CD14-positive monocyte (primary cell): ENCODE measurements at regions of chr9 and their contacts with region 1.

Region 1: DNA sequence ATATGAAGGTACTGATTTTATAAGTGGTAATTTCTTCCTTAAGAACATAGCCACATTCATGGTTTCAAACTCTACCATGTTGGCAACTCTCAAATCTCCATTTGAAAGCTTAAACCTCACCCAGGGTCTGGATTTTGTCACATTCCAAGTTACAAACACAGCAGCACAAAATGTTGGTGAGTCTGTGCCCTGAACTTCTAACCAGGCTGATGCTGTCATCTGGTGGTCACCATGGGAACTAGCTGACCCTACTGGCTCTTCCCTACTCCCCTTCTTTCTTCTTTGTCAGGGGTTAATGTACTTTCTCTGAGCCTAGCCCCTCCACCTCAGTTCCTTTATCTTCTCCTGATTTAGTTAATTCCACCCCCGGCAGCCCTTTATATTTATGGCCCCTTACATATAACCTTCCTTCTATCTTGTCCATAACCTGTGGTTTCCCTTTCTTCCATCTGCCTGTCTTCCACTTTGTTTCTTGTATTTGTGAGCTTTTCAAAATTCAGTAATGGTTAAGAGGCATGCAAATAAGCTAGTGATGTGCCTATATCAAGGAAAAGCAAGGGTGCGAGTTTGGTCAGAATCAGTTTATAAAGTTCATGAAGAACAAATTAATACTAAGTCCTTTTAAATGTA is 35.9 kb downstream of the TGFBR1 start:
- DNase-seq: peak; percentile 52 to 66 (median 64)
- H3K4me3 ChIP-seq: no peak overlapping the region
- H3K4me3 Mint-ChIP-seq: no peak overlapping the region
- H3K27ac ChIP-seq: no peak overlapping the region
- H3K27ac Mint-ChIP-seq: peak overlapping the region in 4 of 7 donors; percentile 0 to 44 (median 30)
- H3K4me1 ChIP-seq: peaks cover 22 to 26% of the 10 kb centered on the region in 2 donors
- H3K4me1 Mint-ChIP-seq: peaks cover 34% of the 10 kb centered on the region
- H3K27me3 ChIP-seq: no peaks in the 10 kb centered on the region
- H3K27me3 Mint-ChIP-seq: peaks cover 0 to 2% (median under 1%) of the 10 kb centered on the region in 3 donors
- CTCF ChIP-seq: peak; percentile 95

Region 2: GRCh38 chr9:98974994-98975712 is 165.6 kb before region 1 on chr9:
- intact Hi-C with region 1: loop called (anchors 1 to 5 kb)
- DNase-seq: peak; percentile 53 to 63 (median 60)
- H3K4me3 ChIP-seq: no peak overlapping the region
- H3K4me3 Mint-ChIP-seq: peak overlapping the region in 1 of 2 donors; percentile 80
- H3K27ac ChIP-seq: no peak overlapping the region
- H3K27ac Mint-ChIP-seq: peak overlapping the region in 2 of 7 donors; percentile 12 to 35
- H3K4me1 ChIP-seq: peaks cover 4 to 6% of the 10 kb centered on the region in 2 donors
- H3K4me1 Mint-ChIP-seq: peaks cover 9% of the 10 kb centered on the region
- H3K27me3 ChIP-seq: peaks cover 5 to 16% of the 10 kb centered on the region in 2 donors
- H3K27me3 Mint-ChIP-seq: peaks cover 17 to 43% (median 30%) of the 10 kb centered on the region in 3 donors
- CTCF ChIP-seq: peak; percentile 98

Region 3: DNA sequence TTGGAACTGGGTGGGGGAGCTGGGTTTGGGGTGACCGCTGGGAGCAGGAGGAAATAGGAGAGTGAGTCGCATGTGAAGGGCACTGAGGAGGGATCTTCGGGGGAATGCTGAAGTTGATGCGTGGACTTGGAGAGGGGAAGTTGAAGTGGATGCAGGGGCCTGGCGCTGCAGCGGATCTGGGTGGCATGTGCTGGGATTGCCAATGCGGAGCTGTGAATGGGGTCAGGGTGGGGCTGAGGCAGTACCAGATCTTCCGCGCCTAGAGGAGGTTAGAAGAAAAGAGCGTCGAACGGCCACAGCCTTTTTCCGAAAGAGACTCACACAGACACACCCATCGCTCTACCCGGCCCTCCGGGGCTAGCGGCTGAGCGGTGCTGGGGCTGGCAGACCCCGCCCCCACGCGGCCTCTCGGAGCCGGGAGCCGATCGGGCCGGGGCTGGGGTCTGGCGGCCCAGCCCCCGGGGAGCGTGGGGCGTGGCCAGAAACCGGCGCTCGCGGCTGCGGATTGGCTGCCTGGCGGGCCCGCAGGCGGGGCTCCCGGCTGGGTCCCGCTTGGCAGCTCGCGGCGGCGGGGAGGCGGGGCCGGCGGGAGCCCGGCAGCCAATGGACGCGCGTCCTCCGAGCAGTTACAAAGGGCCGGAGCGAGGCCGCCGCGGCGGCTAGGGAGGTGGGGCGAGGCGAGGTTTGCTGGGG is 36.2 kb before region 1 on chr9 and contains the start of gene TGFBR1:
- intact Hi-C with region 1: loop called in 1 of 2 experiments (anchors 2 kb)
- DNase-seq: peak; percentile 82 to 88 (median 83)
- H3K4me3 ChIP-seq: peak within 1 kb of the TSS; percentile 74 to 96 (median 85)
- H3K4me3 Mint-ChIP-seq: peak within 1 kb of the TSS; percentile 96 to 99
- H3K27ac ChIP-seq: peak within 1 kb of the TSS; percentile 68 to 94
- H3K27ac Mint-ChIP-seq: peak within 1 kb of the TSS; percentile 87 to 98 (median 95)
- H3K4me1 ChIP-seq: peaks cover 47 to 52% of the 10 kb centered on the region in 2 donors
- H3K4me1 Mint-ChIP-seq: peaks cover 50% of the 10 kb centered on the region
- H3K27me3 ChIP-seq: no peaks in the 10 kb centered on the region
- H3K27me3 Mint-ChIP-seq: peaks cover 0 to 5% (median 0%) of the 10 kb centered on the region in 3 donors
- CTCF ChIP-seq: no peak
- polyA plus RNA-seq, gene TGFBR1: 10.7 to 26.8 (median 25.0) TPM

Region 4: GRCh38 chr9:99130069-99130468 is 10.7 kb before region 1 on chr9:
- intact Hi-C with region 1: no loop called
- DNase-seq: peak in 2 of 3 donors; percentile 29 to 51
- H3K4me3 ChIP-seq: no peak overlapping the region
- H3K4me3 Mint-ChIP-seq: no peak overlapping the region
- H3K27ac ChIP-seq: no peak overlapping the region
- H3K27ac Mint-ChIP-seq: peak overlapping the region in 3 of 7 donors; percentile 3 to 69 (median 24)
- H3K4me1 ChIP-seq: peaks cover 3 to 4% of the 10 kb centered on the region in 2 donors
- H3K4me1 Mint-ChIP-seq: peaks cover 35% of the 10 kb centered on the region
- H3K27me3 ChIP-seq: no peaks in the 10 kb centered on the region
- H3K27me3 Mint-ChIP-seq: no peaks in the 10 kb centered on the region
- CTCF ChIP-seq: no peak

Region 5: DNA sequence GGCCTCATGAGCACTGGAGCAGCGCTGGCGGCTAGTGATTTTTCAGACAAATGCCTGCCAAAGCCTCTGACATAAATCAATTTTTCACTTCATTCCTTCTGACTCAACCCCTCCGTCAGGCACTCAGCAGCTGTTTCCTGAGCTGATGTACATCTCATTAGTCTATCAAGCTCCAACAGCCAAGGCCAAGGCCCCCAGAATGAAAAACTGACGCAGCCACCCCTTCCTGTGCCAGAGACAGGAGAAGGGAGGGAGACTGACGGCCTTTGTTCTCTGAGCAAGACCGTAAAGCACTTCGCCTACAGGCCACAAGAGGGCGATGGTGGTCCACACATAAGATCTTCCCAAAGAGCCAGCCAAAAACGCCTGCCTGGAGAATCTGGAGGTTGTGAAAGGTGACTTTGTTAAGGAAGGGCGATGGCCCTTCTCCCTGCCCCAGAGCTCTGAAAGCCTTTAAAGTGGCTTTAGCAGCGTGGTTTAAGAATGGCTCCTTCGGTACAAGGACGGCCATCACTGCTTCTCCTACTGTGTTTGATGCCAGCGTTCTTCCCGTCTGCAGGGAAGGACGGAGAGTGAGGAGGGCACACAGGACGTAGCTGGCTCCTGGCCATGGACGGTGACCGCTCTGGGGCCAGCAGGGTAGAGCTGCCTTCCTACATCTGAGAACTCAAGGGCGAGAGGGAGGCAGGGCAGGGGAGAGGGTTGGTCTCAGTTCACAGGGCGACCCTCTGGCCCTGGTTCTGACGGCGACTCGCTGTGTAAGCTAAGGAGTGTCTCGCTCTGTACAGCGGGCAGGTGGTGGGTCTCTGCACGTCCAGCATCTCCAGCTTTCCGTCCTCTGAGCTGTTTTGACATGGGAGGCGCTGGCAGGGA is 43.9 kb after region 1 on chr9:
- intact Hi-C with region 1: no loop called
- DNase-seq: peak; percentile 65 to 82 (median 73)
- H3K4me3 ChIP-seq: peak overlapping the region in 1 of 3 experiments; percentile 41
- H3K4me3 Mint-ChIP-seq: peak overlapping the region; percentile 39 to 46
- H3K27ac ChIP-seq: no peak overlapping the region
- H3K27ac Mint-ChIP-seq: peak overlapping the region in 2 of 7 donors; percentile 63 to 64
- H3K4me1 ChIP-seq: peaks cover 31 to 36% of the 10 kb centered on the region in 2 donors
- H3K4me1 Mint-ChIP-seq: peaks cover 33% of the 10 kb centered on the region
- H3K27me3 ChIP-seq: no peaks in the 10 kb centered on the region
- H3K27me3 Mint-ChIP-seq: peaks cover 0 to 2% (median 0%) of the 10 kb centered on the region in 3 donors
- CTCF ChIP-seq: peak; percentile 94